ENCODE measurements at regions of chr20 and their contacts with region 1.

Region 1: DNA sequence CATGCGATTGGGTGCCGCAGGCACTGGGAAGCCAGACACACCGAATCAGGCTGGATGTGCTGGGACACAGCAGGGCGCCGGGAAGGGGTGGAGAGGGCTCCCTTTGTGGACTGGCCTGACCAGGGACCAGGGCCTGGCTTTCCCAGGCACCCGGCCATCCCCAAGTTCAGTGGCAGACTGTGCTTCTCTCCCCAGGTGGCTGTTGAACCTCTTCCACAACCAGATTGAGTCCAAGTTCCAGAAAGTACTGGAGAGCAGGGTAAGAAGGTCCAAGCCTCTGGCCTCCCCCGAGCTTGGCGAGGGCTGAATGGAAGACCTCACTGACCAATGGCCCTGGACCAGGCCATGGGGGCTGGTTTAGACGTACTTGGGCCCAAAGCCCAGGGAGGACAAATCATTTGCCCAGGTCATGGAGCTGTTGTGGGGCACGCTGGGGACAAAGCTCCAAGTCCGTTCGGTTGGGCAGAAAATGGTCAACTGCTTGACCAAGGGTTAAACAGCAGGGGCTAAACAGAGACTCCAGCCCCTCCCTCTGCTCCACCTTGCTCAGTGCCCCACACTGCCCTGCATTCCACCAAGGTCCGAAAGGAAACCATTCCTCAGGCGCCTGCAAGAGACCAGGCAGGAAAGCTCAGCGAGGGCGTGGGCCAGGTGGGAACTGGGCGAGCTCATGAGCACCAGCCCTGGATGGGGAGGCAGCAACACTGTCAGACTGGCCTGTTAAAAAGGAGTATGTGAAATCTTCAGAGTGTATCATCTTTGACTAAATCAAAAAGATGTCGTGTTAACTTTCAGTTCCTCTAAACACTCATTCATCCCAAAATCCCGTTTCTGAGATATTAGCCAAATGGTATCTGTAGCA is 9.1 kb downstream of the LBP start:
- DNase-seq: no peak
- ATAC-seq: no peak
- H3K4me3 ChIP-seq: no peak overlapping the region
- H3K27ac ChIP-seq: no peak overlapping the region
- H3K4me1 ChIP-seq: no peaks in the 10 kb centered on the region
- H3K27me3 ChIP-seq: no peaks in the 10 kb centered on the region
- CTCF ChIP-seq: no peak
- POLR2A ChIP-seq: no peak

Region 2: GRCh38 chr20:38337561-38338140 is 17.7 kb before region 1 on chr20:
- in situ Hi-C with region 1: no loop called
- intact Hi-C with region 1: loop called (anchors 1 kb)
- DNase-seq: no peak
- ATAC-seq: no peak
- H3K4me3 ChIP-seq: no peak overlapping the region
- H3K27ac ChIP-seq: no peak overlapping the region
- H3K4me1 ChIP-seq: no peaks in the 10 kb centered on the region
- H3K27me3 ChIP-seq: no peaks in the 10 kb centered on the region
- CTCF ChIP-seq: peak in 3 of 5 experiments; percentile 20 to 51 (median 22)
- POLR2A ChIP-seq: no peak

Region 3: GRCh38 chr20:38387953-38388352 is 32.6 kb after region 1 on chr20:
- in situ Hi-C with region 1: no loop called
- intact Hi-C with region 1: no loop called
- DNase-seq: no peak
- ATAC-seq: no peak
- H3K4me3 ChIP-seq: no peak overlapping the region
- H3K27ac ChIP-seq: no peak overlapping the region
- H3K4me1 ChIP-seq: no peaks in the 10 kb centered on the region
- H3K27me3 ChIP-seq: no peaks in the 10 kb centered on the region
- CTCF ChIP-seq: no peak
- POLR2A ChIP-seq: no peak

Region 4: DNA sequence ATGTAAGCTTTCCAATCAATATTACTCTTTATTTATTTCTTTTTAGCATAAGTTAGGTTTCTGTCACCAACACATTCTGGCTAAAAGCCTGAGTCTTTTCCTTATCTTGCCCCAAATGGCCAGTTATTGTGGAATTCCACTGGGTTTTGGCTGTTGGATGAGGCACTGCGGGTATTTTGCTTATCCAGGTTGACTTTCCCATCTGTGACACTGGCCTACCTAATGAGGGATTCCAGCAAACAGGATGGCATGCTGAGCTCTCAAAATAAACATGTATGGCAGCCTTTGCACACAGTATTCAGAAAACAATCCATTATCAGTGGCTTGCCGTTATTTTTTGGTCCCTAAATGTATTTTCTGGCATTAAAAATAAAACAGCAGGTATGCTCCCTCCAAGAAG is 110.8 kb after region 1 on chr20:
- in situ Hi-C with region 1: no loop called
- intact Hi-C with region 1: no loop called
- DNase-seq: no peak
- ATAC-seq: no peak
- H3K4me3 ChIP-seq: no peak overlapping the region
- H3K27ac ChIP-seq: no peak overlapping the region
- H3K4me1 ChIP-seq: no peaks in the 10 kb centered on the region
- H3K27me3 ChIP-seq: no peaks in the 10 kb centered on the region
- CTCF ChIP-seq: no peak
- POLR2A ChIP-seq: no peak

Measured in gastrocnemius medialis (tissue), 4 donors.